Activated CD4-positive, alpha-beta T cell treated with anti-CD3 and anti-CD28 coated beads for 36 hours (primary cell): ENCODE measurements at regions of chr5 and their contacts with region 1.

Region 1: DNA sequence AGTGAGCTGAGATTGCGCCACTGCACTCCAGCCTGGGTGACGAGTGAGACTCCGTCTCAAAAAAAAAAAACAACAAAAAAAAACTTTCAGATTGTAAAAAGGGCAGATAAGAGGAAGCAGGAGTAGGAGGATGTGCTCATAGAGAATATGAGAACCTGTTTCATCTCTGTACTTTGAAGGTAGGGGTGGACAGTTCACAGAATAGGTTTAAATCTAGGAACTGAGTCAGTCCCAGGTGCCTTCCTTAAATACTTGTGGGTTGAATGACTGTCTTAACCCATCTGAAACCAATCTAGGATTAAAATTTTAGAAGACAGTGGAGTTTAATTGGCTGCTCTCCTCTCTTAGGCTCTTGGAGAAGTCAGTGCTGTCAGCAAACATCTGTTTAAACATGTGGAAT is 12.4 kb downstream of the POLK start:
- DNase-seq: peak; percentile 29
- ATAC-seq: peak; percentile 97
- H3K4me3 Mint-ChIP-seq: peak overlapping the region; percentile 20
- H3K27ac Mint-ChIP-seq: peak overlapping the region; percentile 61
- H3K4me1 Mint-ChIP-seq: peaks cover 59% of the 10 kb centered on the region
- H3K27me3 Mint-ChIP-seq: no peaks in the 10 kb centered on the region

Region 2: GRCh38 chr5:75566710-75567309 is 42.7 kb after region 1 on chr5:
- CTCF ChIA-PET with region 1: interaction called, 4 read pairs
- POLR2A ChIA-PET with region 1: no interaction called
- intact Hi-C with region 1: loop called (anchors 1 kb)
- DNase-seq: peak; percentile 78
- ATAC-seq: peak; percentile 85
- H3K4me3 Mint-ChIP-seq: peak overlapping the region; percentile 56
- H3K27ac Mint-ChIP-seq: peak overlapping the region; percentile 96
- H3K4me1 Mint-ChIP-seq: peaks cover 63% of the 10 kb centered on the region
- H3K27me3 Mint-ChIP-seq: no peaks in the 10 kb centered on the region

Region 3: DNA sequence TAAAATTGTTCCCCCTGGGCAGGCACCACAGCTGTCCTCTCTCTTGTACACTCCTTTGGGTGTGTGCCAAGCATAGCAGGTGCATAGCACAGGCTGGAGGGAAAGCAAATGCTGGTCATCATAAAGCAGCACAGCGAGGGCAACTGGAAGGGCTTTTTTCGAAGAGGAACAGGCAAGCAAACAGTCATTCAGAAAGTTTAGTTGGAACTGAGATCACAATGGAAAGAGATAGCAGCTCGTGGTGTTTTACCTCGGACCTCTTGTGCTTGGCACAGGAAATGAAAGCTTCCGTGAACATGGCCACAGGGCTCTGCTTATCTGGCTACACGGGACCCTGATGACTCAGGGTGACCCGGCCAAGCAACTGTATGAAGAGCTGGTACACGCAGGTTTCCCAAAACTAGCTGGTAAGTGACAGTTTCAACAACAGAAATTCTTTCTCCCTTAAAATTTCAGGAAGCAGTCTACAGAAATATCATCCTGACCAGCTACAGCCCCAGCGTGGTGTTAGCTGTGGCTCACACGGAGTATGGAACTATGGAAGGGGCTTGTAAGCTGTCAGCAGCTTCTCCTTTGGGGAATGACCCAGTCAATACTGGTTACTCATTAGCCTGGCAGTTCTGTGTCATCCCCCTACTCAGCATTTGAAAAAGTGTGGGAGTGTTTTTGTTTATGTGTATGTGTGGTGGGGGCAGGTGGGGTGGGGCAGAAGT is 145.1 kb after region 1 on chr5:
- CTCF ChIA-PET with region 1: no interaction called
- POLR2A ChIA-PET with region 1: no interaction called
- intact Hi-C with region 1: no loop called
- DNase-seq: peak; percentile 82
- ATAC-seq: peak; percentile 97
- H3K4me3 Mint-ChIP-seq: peak overlapping the region; percentile 67
- H3K27ac Mint-ChIP-seq: peak overlapping the region; percentile 91
- H3K4me1 Mint-ChIP-seq: peaks cover 37% of the 10 kb centered on the region
- H3K27me3 Mint-ChIP-seq: no peaks in the 10 kb centered on the region